Activated T-helper 2 cell treated with anti-CD3 and anti-CD28 coated beads, Interferon-gamma antibody, Interleukin-2, Interleukin-4, amounts not matched to agents 10 μg/mL and 5 μg/mL and 100 μg/mL, durations not matched to agents 14 hours and 24 hours and 36 hours (primary cell): ENCODE measurements at regions of chr14 and their contacts with region 1.

Region 1: DNA sequence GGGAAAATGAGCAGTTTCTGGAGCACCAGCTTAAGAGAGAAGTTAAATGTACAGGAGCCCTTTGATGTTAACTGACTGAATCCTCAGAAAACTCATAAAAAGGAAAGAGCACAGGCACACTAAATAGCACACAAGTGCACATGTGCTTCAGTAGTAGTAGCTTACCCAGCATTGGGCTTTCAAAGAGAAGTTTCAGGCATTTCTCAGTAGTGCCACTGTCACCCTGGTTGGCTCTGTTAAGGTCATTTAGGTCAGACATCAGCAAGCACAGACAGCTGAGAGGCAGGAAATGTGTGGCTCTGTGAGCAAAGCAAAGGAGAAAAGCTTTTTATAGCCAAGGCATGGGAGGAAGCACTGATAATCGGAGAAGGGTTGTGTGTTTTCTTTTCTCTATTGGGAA is 96.3 kb upstream of the HIF1A start:
- DNase-seq: no peak
- H3K4me3 Mint-ChIP-seq: no peak overlapping the region
- H3K27ac Mint-ChIP-seq: peak overlapping the region; percentile 25
- H3K4me1 Mint-ChIP-seq: peaks cover 41% of the 10 kb centered on the region
- H3K27me3 Mint-ChIP-seq: peaks cover 6% of the 10 kb centered on the region

Region 2: DNA sequence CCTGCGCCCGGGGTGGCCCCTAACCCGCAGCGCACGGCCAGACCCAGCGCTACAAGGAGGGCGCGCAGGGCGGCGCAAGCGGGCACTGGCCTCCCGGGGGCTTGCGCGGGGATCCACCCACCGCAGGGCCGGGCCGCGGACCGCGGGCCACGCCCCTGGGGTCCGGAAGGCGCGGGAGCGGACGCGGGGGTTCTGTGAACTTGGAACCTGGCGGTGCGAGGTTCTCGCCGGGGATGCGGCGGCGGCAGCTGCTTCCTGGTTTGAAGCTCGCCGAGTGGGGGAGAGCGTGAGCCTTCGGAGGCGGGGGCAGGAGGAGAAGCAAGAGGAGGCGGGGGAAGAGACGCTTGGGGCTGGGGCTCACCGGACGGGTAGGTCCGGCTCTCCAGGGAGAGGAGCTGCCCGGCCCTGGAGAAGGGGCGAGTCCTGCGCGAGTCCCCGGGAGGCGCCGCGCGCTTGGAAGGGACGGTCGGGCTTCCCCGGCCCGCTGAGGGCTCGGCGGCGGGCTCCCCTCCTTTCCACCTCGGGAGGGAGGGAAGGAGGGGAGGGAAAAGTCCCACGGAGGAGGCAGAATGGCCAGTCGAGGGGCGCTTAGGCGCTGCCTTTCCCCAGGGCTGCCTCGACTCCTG is 277.5 kb before region 1 on chr14 and contains the start of gene PRKCH:
- intact Hi-C with region 1: loop called (anchors 10 kb)
- DNase-seq: peak; percentile 81
- H3K4me3 Mint-ChIP-seq: peak within 1 kb of the TSS; percentile 98
- H3K27ac Mint-ChIP-seq: peak within 1 kb of the TSS; percentile 94
- H3K4me1 Mint-ChIP-seq: peaks cover 29% of the 10 kb centered on the region
- H3K27me3 Mint-ChIP-seq: no peaks in the 10 kb centered on the region
- total RNA-seq, gene PRKCH: 101 and 102 TPM in 2 replicates

Region 3: GRCh38 chr14:61493239-61493638 is 105.7 kb before region 1 on chr14:
- intact Hi-C with region 1: no loop called
- DNase-seq: no peak
- H3K4me3 Mint-ChIP-seq: no peak overlapping the region
- H3K27ac Mint-ChIP-seq: no peak overlapping the region
- H3K4me1 Mint-ChIP-seq: peaks cover 20% of the 10 kb centered on the region
- H3K27me3 Mint-ChIP-seq: no peaks in the 10 kb centered on the region

Region 4: GRCh38 chr14:61525293-61526011 is 73.5 kb before region 1 on chr14:
- intact Hi-C with region 1: loop called (anchors 1 kb)
- DNase-seq: peak; percentile 60
- H3K4me3 Mint-ChIP-seq: peak overlapping the region; percentile 2
- H3K27ac Mint-ChIP-seq: peak overlapping the region; percentile 74
- H3K4me1 Mint-ChIP-seq: peaks cover 69% of the 10 kb centered on the region
- H3K27me3 Mint-ChIP-seq: no peaks in the 10 kb centered on the region

Region 5: DNA sequence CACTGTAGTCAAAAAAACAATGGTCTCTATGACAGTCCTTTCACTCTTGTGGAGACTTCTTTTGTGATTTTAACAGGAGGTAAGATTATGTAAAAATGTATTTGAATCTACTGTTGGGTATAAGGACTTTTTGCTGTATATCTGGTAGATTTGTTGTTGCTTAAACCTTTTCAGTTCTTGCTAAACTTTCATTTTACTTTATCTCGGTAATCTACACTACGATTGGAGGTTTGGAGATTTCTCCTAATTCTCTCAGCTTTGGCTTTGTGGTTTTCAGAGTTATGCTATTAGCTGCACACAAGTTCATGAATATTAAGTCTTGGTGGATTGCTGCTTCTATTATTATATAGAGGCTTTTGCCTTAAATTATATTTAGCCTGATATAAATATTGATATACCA is 20.2 kb before region 1 on chr14:
- intact Hi-C with region 1: loop called (anchors 1 kb)
- DNase-seq: no peak
- H3K4me3 Mint-ChIP-seq: no peak overlapping the region
- H3K27ac Mint-ChIP-seq: no peak overlapping the region
- H3K4me1 Mint-ChIP-seq: peaks cover 37% of the 10 kb centered on the region
- H3K27me3 Mint-ChIP-seq: peaks cover 74% of the 10 kb centered on the region

Region 6: DNA sequence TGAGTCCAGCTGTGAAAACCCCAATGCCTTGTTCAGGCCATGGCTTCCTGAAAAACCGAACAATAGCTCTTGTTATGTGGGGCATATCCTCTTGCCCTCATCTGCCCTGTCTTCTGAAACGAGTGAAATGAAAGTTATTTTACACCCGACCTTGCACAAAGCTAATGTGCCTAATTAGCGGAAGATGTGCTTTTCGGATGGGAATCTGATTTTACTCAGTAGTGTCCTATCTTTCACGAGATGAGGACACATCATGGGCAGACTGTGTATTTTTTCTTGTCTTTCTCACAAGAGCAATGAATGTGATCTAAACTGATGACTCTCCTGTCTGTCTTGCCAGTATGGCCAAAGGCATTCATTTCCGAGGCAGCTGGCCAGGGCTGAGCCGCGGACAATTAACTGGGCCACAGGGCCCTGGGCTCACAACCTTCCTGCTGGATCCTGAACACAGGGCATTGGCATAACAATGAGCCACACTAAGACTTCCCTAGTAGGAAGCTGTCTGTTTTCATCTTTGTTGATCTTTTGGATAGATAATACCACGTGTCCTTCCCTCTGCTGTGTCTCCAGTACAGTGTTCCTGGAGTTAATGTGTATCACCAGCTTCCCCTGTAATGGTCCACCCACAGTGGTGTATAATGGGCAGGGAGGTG is 10.3 kb after region 1 on chr14:
- intact Hi-C with region 1: no loop called
- DNase-seq: no peak
- H3K4me3 Mint-ChIP-seq: no peak overlapping the region
- H3K27ac Mint-ChIP-seq: no peak overlapping the region
- H3K4me1 Mint-ChIP-seq: no peaks in the 10 kb centered on the region
- H3K27me3 Mint-ChIP-seq: peaks cover 6% of the 10 kb centered on the region

Region 7: DNA sequence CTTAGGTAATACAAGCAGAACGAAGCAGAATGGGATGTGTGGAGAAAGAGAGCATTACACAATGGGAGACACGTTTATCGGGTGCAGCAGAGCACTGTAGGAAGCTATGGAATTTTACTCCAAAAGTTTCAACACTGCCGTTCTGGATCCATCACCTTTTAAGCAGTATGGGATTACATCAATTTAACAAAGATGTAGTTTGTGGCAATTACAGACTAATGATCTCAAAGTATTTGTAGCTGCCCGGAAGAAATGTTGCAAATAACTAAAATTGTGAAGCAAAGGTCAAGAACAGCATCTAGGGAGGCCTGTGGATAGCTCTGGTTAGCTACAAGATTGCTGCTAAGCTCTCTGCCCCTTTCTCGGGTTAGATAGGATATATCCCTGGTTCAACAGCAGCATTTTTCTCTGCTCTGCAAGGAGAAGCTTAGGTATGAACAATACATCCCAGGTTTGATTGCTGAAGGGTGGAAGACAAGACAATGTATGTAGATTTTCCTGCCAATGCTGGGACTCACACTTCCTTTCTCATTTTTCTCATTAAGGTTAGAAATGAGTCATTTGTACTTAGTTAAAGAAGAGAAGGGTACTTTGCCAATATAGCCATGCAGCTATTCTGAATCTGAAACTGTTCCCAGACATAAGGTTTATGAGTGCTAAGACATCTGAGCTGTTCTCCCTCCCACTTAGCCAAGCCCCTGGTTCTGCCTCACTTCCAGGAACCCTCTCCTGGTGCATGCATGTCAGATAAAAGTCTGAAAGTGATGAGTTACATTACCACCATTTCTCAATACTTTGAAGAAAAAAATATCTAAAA is 21.4 kb after region 1 on chr14:
- intact Hi-C with region 1: loop called (anchors 1 kb)
- DNase-seq: no peak
- H3K4me3 Mint-ChIP-seq: no peak overlapping the region
- H3K27ac Mint-ChIP-seq: no peak overlapping the region
- H3K4me1 Mint-ChIP-seq: peaks cover 51% of the 10 kb centered on the region
- H3K27me3 Mint-ChIP-seq: no peaks in the 10 kb centered on the region

Region 8: GRCh38 chr14:61631045-61631687 is 32.2 kb after region 1 on chr14:
- intact Hi-C with region 1: no loop called
- DNase-seq: no peak
- H3K4me3 Mint-ChIP-seq: no peak overlapping the region
- H3K27ac Mint-ChIP-seq: no peak overlapping the region
- H3K4me1 Mint-ChIP-seq: peaks cover 5% of the 10 kb centered on the region
- H3K27me3 Mint-ChIP-seq: no peaks in the 10 kb centered on the region

Region 9: GRCh38 chr14:61678975-61679374 is 80.0 kb after region 1 on chr14:
- intact Hi-C with region 1: no loop called
- DNase-seq: no peak
- H3K4me3 Mint-ChIP-seq: no peak overlapping the region
- H3K27ac Mint-ChIP-seq: no peak overlapping the region
- H3K4me1 Mint-ChIP-seq: peaks cover 11% of the 10 kb centered on the region
- H3K27me3 Mint-ChIP-seq: no peaks in the 10 kb centered on the region

Region 10: GRCh38 chr14:61694830-61695694 is 96.1 kb after region 1 on chr14 and contains the start of gene HIF1A:
- intact Hi-C with region 1: loop called (anchors 1 kb)
- DNase-seq: peak; percentile 96
- H3K4me3 Mint-ChIP-seq: peak within 1 kb of the TSS; percentile 89
- H3K27ac Mint-ChIP-seq: peak within 1 kb of the TSS; percentile 95
- H3K4me1 Mint-ChIP-seq: peaks cover 50% of the 10 kb centered on the region
- H3K27me3 Mint-ChIP-seq: no peaks in the 10 kb centered on the region
- total RNA-seq, gene HIF1A: 131 and 138 TPM in 2 replicates